ENCODE measurements at regions of chr12 and their contacts with region 1.

Region 1: GRCh38 chr12:64446295-64446694 is 5.6 kb upstream of the TBK1 start:
- DNase-seq: no peak
- H3K4me3 Mint-ChIP-seq: no peak overlapping the region
- H3K27ac Mint-ChIP-seq: peak overlapping the region; percentile 1
- H3K4me1 Mint-ChIP-seq: peaks cover 19% of the 10 kb centered on the region
- H3K27me3 Mint-ChIP-seq: no peaks in the 10 kb centered on the region

Region 2: DNA sequence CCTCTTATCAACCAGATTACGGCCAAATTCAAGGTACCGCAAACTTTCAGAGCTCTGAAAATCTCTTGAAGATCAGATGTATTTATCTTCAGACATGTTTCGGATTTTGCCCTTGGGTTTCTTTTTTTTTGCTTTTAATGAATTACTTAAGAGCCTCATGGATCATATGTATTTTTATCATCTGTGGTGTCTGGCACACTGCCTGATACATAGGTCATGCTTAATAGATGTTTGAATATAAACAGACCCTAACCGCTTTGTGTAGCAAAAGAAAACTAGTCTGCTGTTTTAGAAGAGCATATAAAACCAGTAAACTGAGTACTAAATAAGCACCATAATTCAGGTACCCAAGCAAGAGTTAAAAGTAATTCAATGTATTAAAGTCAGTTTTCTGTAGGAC is 14.5 kb before region 1 on chr12:
- CTCF ChIA-PET with region 1: interaction called, 11 read pairs
- POLR2A ChIA-PET with region 1: no interaction called
- DNase-seq: no peak
- H3K4me3 Mint-ChIP-seq: no peak overlapping the region
- H3K27ac Mint-ChIP-seq: no peak overlapping the region
- H3K4me1 Mint-ChIP-seq: peaks cover 1% of the 10 kb centered on the region
- H3K27me3 Mint-ChIP-seq: no peaks in the 10 kb centered on the region

Region 3: GRCh38 chr12:64560396-64561304 is 114.4 kb after region 1 on chr12:
- CTCF ChIA-PET with region 1: no interaction called
- POLR2A ChIA-PET with region 1: no interaction called
- DNase-seq: no peak
- H3K4me3 Mint-ChIP-seq: no peak overlapping the region
- H3K27ac Mint-ChIP-seq: no peak overlapping the region
- H3K4me1 Mint-ChIP-seq: no peaks in the 10 kb centered on the region
- H3K27me3 Mint-ChIP-seq: no peaks in the 10 kb centered on the region

Measured in activated CD4-positive, alpha-beta T cell treated with anti-CD3 and anti-CD28 coated beads, Interleukin-2, amount 10 ng/mL, durations not matched to agents 7 days and 5 days (primary cell).